ENCODE measurements at regions of chr22 and their contacts with region 1.

Region 1: DNA sequence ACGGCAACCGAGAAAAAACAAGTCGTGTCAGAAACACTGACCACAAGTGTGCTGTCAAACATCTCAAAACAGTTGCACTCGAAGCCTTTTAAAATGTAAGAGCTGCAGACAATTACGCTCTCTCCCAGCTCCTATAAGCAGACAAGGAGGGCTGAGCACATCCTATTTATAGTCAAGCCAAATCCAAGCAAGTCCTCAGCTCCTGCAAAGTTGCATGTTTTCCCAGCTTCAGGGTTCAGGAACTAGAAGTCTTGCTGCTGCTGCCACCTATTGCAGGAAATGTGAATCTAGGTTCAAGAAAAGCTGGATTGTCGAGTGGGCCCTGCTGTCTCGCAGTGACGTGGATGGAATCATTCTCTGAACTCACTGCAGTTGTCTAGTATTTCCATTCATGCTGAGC is 15.5 kb downstream of the EFCAB6 start:
- DNase-seq: peak; percentile 11
- H3K4me3 ChIP-seq: no peak overlapping the region
- H3K27ac ChIP-seq: no peak overlapping the region
- H3K4me1 ChIP-seq: no peaks in the 10 kb centered on the region; a peak in 1 of 4 replicates
- H3K27me3 ChIP-seq: no peaks in the 10 kb centered on the region
- CTCF ChIP-seq: peak; percentile 48
- EP300 ChIP-seq: no peak
- RAD21 ChIP-seq: peak; percentile 70

Region 2: GRCh38 chr22:43385770-43386641 is 410.6 kb before region 1 on chr22:
- CTCF ChIA-PET with region 1: interaction called, 10 read pairs
- POLR2A ChIA-PET with region 1: no interaction called
- DNase-seq: peak; percentile 80
- H3K4me3 ChIP-seq: peak overlapping the region in 1 of 2 experiments; percentile 55; a peak in 2 of 4 replicates
- H3K27ac ChIP-seq: no peak overlapping the region
- H3K4me1 ChIP-seq: no peaks in the 10 kb centered on the region; a peak in 1 of 4 replicates
- H3K27me3 ChIP-seq: no peaks in the 10 kb centered on the region
- CTCF ChIP-seq: peak; percentile 64
- EP300 ChIP-seq: no peak
- RAD21 ChIP-seq: peak; percentile 90

Region 3: GRCh38 chr22:43777049-43777685 is 19.4 kb before region 1 on chr22:
- CTCF ChIA-PET with region 1: no interaction called
- POLR2A ChIA-PET with region 1: no interaction called
- DNase-seq: no peak
- H3K4me3 ChIP-seq: no peak overlapping the region
- H3K27ac ChIP-seq: no peak overlapping the region
- H3K4me1 ChIP-seq: no peaks in the 10 kb centered on the region
- H3K27me3 ChIP-seq: no peaks in the 10 kb centered on the region
- CTCF ChIP-seq: no peak
- EP300 ChIP-seq: no peak
- RAD21 ChIP-seq: no peak

Region 4: DNA sequence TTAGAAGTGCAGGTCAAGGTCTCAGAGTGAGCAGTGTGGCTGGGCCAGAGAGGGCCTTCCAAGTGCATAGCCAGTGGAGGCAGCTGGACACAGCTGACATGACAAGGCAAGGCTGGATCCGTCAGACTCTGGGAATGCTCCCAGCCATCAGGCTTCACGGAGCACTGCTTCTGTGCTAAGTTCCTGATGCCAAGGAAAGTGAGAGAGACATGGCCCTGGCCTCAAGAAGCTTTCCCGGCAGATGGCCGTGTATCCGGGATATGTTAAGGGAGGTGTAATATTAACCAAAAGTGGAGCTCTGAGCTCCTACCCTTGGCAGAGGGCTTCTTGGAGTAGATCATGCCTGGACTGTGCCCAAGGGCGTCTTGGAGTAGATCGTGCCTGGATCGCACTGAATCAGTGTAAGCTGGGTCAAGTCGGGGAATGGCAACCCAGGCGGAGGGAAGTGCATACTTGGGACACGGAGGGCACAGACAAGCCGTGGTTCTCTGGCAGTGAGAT is 22.9 kb after region 1 on chr22:
- CTCF ChIA-PET with region 1: no interaction called
- POLR2A ChIA-PET with region 1: no interaction called
- DNase-seq: no peak
- H3K4me3 ChIP-seq: no peak overlapping the region
- H3K27ac ChIP-seq: no peak overlapping the region
- H3K4me1 ChIP-seq: no peaks in the 10 kb centered on the region
- H3K27me3 ChIP-seq: no peaks in the 10 kb centered on the region
- CTCF ChIP-seq: no peak
- EP300 ChIP-seq: no peak
- RAD21 ChIP-seq: no peak

Region 5: DNA sequence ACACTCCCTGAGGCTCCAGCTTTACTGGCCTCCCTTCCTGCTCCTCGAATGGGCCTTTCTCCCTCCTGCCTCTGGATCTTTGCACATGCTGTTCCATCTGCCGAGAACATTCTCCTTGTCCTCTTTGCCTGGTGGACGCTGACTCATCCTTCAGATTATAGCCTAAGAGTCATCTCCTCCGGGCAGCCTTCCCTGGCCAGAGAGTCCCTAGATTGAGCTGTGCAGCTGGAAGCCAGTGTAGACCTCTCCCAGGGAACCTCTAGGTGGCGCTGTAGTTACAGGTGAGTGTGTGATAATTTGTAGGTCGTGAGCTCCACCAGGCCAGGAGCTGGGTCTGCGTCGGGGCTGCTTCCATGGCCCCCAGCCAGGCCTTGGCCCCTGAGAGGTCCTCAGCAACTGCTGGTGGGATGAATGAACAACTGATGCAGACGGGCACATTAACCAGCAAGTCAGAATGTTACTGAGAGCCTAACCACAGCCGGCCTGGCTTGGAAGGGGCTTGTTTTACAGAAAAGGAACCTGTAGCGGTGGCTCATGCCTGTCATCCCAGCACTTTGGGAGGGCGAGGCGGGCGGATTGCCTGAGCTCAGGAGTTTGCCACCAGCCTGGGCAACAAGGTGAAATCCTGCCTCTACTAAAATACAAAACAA is 86.6 kb after region 1 on chr22:
- CTCF ChIA-PET with region 1: no interaction called
- POLR2A ChIA-PET with region 1: no interaction called
- DNase-seq: peak; percentile 74
- H3K4me3 ChIP-seq: no peak overlapping the region; a peak in 1 of 4 replicates
- H3K27ac ChIP-seq: no peak overlapping the region
- H3K4me1 ChIP-seq: no peaks in the 10 kb centered on the region
- H3K27me3 ChIP-seq: no peaks in the 10 kb centered on the region; the same call in 1 of the 2 replicates
- CTCF ChIP-seq: peak; percentile 57
- EP300 ChIP-seq: no peak
- RAD21 ChIP-seq: peak; percentile 48

Measured in SK-N-SH (cell line).